ENCODE measurements at regions of chr19 and their contacts with region 1.

Region 1: DNA sequence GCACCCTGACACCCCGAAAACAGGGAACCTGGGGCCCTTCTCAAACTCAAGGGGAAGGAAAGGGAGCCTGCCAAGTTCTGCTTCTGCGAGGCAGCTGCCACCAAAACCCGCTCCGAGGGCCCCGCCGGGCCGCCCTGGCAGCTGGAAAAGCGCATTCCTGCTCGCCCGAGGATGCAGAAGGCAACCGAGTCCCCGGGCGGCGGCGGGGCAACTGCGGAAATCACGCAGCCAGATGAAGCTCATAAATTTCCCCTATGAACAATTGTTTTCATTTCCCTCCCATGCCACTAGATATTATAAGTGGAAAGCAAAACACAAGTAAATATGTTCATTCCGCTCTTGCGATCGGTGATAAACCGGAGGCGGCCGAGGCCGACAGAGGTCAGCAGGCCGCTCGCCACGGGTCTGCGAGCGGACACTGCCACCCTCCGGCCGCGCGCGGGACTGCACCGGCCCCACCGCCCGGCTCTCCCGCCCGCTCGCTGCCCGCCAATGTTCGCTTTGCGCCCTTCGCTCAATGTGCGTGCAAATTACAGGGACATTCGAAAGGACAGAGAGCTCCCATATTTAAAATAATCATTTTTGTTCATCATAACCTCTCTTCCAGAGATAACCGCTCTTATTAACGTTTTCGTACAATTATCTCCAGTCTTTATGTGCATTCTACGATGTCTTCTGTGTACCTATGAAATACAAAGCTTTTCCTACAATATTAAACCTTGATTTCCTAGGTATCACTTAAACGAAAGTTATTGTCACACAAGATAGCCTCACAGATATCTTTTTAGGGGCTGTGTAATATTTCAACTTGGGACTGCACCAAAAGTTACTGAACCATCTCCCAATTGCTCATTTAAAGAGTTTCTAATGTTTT is 120.8 kb upstream of the ZNF507 start:
- DNase-seq: peak; percentile 37 to 67
- ATAC-seq: peak; percentile 83 to 92 (median 86)
- H3K4me3 ChIP-seq: peak overlapping the region in 8 of 10 donors; percentile 14 to 48 (median 34)
- H3K27ac ChIP-seq: no peak overlapping the region
- H3K4me1 ChIP-seq: peaks cover 0 to 11% (median 5%) of the 10 kb centered on the region in 9 donors
- H3K27me3 ChIP-seq: peaks cover 0 to 72% (median 57%) of the 10 kb centered on the region in 7 donors
- CTCF ChIP-seq: peak; percentile 98 to 100 (median 100)

Region 2: DNA sequence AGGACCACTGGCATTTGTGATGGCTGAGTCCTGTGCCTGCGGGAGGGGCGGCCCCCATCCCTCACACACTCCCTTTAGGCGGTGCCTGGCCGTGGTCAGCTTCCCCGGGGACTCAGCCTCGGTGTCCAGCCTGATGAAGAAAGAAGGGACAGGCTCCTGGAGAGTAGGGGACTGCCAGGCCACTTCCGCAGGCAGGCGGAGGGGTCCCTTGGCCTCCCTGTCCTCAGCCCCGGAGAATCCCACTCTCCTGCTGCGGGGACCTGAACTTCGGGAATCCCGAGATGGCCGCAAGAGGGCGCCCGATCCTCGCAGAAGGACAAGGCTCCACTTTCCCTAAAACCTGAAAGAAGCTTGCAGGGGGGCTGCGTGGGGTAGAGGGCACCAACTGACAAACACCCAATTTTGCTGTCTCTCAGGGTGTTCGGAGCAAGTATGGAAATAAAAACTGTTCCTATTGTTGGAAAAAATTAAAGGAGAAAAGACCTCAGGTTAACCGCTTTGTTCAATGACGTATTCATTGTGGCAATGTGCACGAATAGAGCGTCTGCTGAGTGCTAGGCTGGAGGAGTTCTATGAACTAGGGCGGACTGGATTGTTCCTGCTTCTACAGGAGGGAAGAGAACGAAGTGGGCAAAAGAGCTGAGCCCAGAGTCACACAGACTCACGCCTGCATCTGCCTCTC is 1555.1 kb before region 1 on chr19:
- intact Hi-C with region 1: loop called in 5 of 10 experiments (anchors 5 kb)
- DNase-seq: peak; percentile 56 to 76
- ATAC-seq: peak in 6 of 8 donors; percentile 3 to 51 (median 27)
- H3K4me3 ChIP-seq: no peak overlapping the region
- H3K27ac ChIP-seq: no peak overlapping the region
- H3K4me1 ChIP-seq: peaks cover 0 to 26% (median 9%) of the 10 kb centered on the region in 9 donors
- H3K27me3 ChIP-seq: peaks cover 0 to 48% (median 22%) of the 10 kb centered on the region in 7 donors
- CTCF ChIP-seq: peak; percentile 73 to 86 (median 82)

Region 3: GRCh38 chr19:30784850-30785457 is 1439.7 kb before region 1 on chr19:
- intact Hi-C with region 1: loop called in 5 of 10 experiments (anchors 5 to 10 kb)
- DNase-seq: peak; percentile 35 to 39
- ATAC-seq: peak in 4 of 8 donors; percentile 37 to 66 (median 54)
- H3K4me3 ChIP-seq: no peak overlapping the region
- H3K27ac ChIP-seq: no peak overlapping the region
- H3K4me1 ChIP-seq: peaks cover 0 to 3% (median 0%) of the 10 kb centered on the region in 9 donors
- H3K27me3 ChIP-seq: peaks cover 0 to 14% (median 0%) of the 10 kb centered on the region in 7 donors
- CTCF ChIP-seq: peak; percentile 30 to 73 (median 56)

Region 4: GRCh38 chr19:31350701-31351068 is 873.9 kb before region 1 on chr19:
- intact Hi-C with region 1: loop called in 1 of 10 experiments (anchors 10 kb)
- DNase-seq: peak; percentile 65 to 66
- ATAC-seq: peak; percentile 26 to 50 (median 44)
- H3K4me3 ChIP-seq: peak overlapping the region; percentile 77 to 100 (median 92)
- H3K27ac ChIP-seq: peak overlapping the region; percentile 78 to 98 (median 94)
- H3K4me1 ChIP-seq: peaks cover 6 to 53% (median 21%) of the 10 kb centered on the region in 9 donors
- H3K27me3 ChIP-seq: peaks cover 0 to 67% (median 40%) of the 10 kb centered on the region in 7 donors
- CTCF ChIP-seq: no peak

Region 5: DNA sequence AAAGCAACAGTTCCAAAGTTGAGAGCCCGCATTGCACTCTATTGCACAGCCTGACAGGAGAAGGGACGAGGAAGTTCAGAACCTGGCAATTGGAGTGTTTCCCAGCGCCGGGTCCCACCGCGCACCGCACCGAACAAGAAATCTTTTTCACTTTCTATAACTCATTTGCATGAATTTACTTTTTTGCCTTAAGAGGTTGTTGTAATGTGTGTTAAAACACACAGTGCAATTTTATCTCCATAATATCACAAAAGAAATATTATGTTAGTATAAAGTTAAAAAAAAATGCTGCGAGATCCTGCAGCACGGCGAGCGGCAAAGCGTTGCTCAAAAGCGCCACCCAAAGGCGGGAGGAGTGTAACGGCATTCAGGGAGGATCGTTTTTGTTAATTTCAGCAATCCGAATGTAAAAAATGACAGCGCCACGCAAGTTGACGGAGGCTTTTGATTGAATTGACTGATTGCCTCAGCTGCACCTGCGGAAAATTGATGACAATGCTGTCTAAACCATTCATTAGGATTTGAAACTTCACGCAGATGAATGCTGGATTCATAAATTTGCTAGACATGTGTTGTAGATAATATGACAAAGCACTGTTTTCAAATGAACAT is 182.8 kb before region 1 on chr19:
- intact Hi-C with region 1: loop called in 2 of 10 experiments (anchors 5 to 10 kb)
- DNase-seq: peak; percentile 27 to 57
- ATAC-seq: no peak
- H3K4me3 ChIP-seq: peak overlapping the region in 8 of 10 donors; percentile 16 to 47 (median 36)
- H3K27ac ChIP-seq: no peak overlapping the region
- H3K4me1 ChIP-seq: peaks cover 0 to 11% (median 0%) of the 10 kb centered on the region in 9 donors
- H3K27me3 ChIP-seq: peaks cover 0 to 59% (median 43%) of the 10 kb centered on the region in 7 donors
- CTCF ChIP-seq: peak; percentile 40 to 82 (median 72)